PC-9 (cell line): ENCODE measurements at regions of chrX and their contacts with region 1.

Region 1: DNA sequence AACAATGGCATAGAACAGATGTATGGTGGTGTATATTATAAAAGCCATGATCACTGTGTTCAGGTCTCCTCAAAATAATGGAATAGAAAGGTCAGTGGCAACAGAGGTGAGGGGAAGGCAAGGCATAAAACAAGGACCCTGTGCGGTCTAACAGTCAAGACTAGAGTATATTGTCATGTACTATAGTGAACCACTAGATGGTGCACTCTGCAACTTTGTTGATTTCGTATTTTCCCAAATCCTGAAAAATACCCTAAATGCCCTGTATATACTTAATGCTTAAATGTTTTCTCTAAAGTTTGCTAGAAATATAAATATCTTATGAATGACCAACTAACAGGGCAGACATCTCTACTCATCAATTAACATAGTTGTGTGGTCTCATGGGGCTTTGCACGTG is 453.0 kb downstream of the PCDH11X start:
- DNase-seq: no peak
- H3K4me3 ChIP-seq: no peak overlapping the region
- H3K27ac ChIP-seq: no peak overlapping the region
- H3K4me1 ChIP-seq: no peaks in the 10 kb centered on the region
- H3K27me3 ChIP-seq: no peaks in the 10 kb centered on the region
- CTCF ChIP-seq: peak; percentile 60

Region 2: GRCh38 chrX:92249125-92249524 is 16.9 kb after region 1 on chrX:
- CTCF ChIA-PET with region 1: no interaction called
- POLR2A ChIA-PET with region 1: no interaction called
- intact Hi-C with region 1: no loop called
- DNase-seq: no peak
- H3K4me3 ChIP-seq: no peak overlapping the region
- H3K27ac ChIP-seq: no peak overlapping the region
- H3K4me1 ChIP-seq: no peaks in the 10 kb centered on the region
- H3K27me3 ChIP-seq: no peaks in the 10 kb centered on the region
- CTCF ChIP-seq: no peak

Region 3: DNA sequence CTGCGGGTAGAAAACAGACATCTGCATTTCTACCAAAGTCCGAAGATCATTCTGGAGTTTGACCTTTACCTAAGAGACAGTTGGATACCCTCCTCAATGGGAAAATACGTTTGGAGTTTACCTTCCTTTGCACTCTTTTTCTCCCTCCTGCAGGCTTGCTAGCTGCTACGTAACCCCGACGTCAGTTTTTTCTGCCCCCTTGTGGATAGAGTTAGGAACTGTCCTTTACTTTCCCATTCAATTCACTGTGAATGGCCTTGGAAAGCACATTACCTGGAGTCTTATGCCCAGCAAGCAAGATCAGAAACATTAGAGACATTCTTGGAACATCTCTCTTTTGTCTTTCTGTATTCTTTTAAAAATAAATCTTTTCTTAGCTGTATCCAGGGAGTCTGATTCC is 1190.5 kb after region 1 on chrX:
- CTCF ChIA-PET with region 1: no interaction called
- POLR2A ChIA-PET with region 1: no interaction called
- intact Hi-C with region 1: loop called (anchors 5 kb)
- DNase-seq: no peak
- H3K4me3 ChIP-seq: no peak overlapping the region
- H3K27ac ChIP-seq: no peak overlapping the region
- H3K4me1 ChIP-seq: no peaks in the 10 kb centered on the region
- H3K27me3 ChIP-seq: no peaks in the 10 kb centered on the region
- CTCF ChIP-seq: peak; percentile 63

Region 4: GRCh38 chrX:93538575-93538974 is 1306.4 kb after region 1 on chrX:
- CTCF ChIA-PET with region 1: no interaction called
- POLR2A ChIA-PET with region 1: no interaction called
- intact Hi-C with region 1: loop called (anchors 5 kb)
- DNase-seq: no peak
- H3K4me3 ChIP-seq: no peak overlapping the region
- H3K27ac ChIP-seq: no peak overlapping the region
- H3K4me1 ChIP-seq: no peaks in the 10 kb centered on the region
- H3K27me3 ChIP-seq: no peaks in the 10 kb centered on the region
- CTCF ChIP-seq: peak; percentile 59